ENCODE measurements at regions of chr13 and their contacts with region 1.

Region 1: GRCh38 chr13:77026818-77027585 is at the start of gene FBXL3:
- DNase-seq: peak; percentile 86 to 93
- ATAC-seq: peak; percentile 81 to 88 (median 85)
- H3K4me3 ChIP-seq: peak within 1 kb of the TSS; percentile 94
- H3K27ac ChIP-seq: peak within 1 kb of the TSS; percentile 99
- H3K4me1 ChIP-seq: peaks cover 35% of the 10 kb centered on the region
- H3K27me3 ChIP-seq: no peaks in the 10 kb centered on the region
- CTCF ChIP-seq: no peak
- total RNA-seq, gene FBXL3: 23.5 to 40.4 (median 24.4) TPM

Region 2: DNA sequence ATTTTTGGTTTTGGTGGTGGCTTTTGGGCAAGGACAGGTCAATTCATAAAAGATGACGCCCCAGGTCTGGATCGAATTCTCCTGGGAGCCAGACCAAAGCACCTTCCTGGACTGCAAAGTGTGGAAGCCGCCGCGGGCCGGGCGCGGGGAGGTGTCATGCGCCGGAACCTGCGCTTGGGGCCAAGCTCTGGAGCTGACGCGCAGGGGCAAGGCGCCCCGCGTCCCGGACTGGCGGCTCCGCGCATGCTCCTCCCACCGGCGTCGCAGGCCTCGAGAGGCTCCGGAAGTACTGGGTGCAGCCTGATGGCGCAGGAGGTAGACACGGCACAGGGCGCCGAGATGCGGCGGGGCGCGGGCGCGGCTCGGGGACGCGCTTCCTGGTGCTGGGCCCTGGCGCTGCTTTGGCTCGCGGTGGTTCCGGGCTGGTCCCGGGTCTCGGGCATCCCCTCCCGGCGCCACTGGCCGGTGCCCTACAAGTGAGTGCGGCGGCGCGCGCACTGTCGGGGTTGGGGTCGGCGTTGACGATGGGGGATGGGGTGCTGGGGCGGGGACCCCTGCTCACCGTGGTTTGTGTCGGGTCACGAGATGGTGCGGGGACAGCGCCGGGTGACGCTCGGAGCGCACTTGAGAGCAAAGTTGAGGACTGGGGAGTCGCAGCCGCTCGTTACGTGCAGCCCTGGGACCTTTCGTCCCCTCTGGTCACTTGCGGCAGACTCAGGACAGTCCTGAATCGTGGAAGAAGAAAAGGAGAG is 35.0 kb before region 1 on chr13 and contains the start of gene CLN5:
- intact Hi-C with region 1: loop called in 1 of 2 experiments (anchors 5 kb)
- DNase-seq: peak; percentile 95 to 98
- ATAC-seq: peak; percentile 97 to 99 (median 98)
- H3K4me3 ChIP-seq: peak within 1 kb of the TSS; percentile 86
- H3K27ac ChIP-seq: peak within 1 kb of the TSS; percentile 91
- H3K4me1 ChIP-seq: peaks cover 11% of the 10 kb centered on the region
- H3K27me3 ChIP-seq: no peaks in the 10 kb centered on the region
- CTCF ChIP-seq: peak; percentile 8
- total RNA-seq, gene CLN5: 5.8 to 9.5 (median 8.9) TPM

Region 3: DNA sequence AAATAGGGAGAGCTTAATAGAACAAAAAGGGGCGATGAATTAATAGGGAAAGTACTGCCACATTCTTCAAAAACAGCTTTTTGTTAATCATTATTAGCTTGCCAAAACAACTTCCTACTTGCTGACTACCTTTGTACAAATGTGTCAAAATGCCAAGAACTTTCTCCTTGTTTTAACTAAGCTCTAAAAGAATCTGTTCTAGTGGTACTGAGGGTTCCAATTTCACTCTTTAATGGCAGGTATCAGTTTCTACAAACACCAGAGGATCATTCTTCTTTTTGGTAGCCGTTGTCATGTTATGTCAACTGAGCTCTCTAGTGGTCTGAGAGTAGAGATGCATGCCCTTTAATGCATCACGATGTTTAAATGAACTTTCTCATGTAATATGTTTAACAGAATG is 29.4 kb after region 1 on chr13:
- intact Hi-C with region 1: loop called in 1 of 2 experiments (anchors 2 kb)
- DNase-seq: no peak
- ATAC-seq: peak in 2 of 4 donors; percentile 43 to 94
- H3K4me3 ChIP-seq: no peak overlapping the region
- H3K27ac ChIP-seq: no peak overlapping the region
- H3K4me1 ChIP-seq: peaks cover 6% of the 10 kb centered on the region
- H3K27me3 ChIP-seq: no peaks in the 10 kb centered on the region
- CTCF ChIP-seq: no peak

Region 4: DNA sequence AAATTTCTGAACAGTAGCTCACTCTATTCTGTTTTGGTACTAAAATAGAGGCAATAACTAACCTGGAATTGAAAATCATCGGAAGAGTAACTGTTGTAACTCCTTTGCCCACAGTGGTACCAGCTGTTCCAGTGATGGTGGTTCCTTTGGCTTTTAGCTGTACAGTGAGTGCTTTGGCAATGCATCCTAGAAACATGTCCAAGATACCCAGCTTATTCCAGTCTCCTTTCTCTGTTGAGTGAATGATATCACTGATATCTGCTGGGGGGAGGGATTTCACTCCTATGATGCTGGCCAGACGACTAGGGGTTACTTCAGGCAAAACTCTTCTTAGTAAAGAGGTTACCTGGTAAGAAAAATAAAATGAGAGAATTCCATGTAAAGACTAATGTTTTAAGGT is 40.5 kb after region 1 on chr13:
- intact Hi-C with region 1: no loop called
- DNase-seq: no peak
- ATAC-seq: no peak
- H3K4me3 ChIP-seq: no peak overlapping the region
- H3K27ac ChIP-seq: no peak overlapping the region
- H3K4me1 ChIP-seq: no peaks in the 10 kb centered on the region
- H3K27me3 ChIP-seq: no peaks in the 10 kb centered on the region
- CTCF ChIP-seq: no peak